ENCODE measurements at regions of chr7 and their contacts with region 1.

Region 1: DNA sequence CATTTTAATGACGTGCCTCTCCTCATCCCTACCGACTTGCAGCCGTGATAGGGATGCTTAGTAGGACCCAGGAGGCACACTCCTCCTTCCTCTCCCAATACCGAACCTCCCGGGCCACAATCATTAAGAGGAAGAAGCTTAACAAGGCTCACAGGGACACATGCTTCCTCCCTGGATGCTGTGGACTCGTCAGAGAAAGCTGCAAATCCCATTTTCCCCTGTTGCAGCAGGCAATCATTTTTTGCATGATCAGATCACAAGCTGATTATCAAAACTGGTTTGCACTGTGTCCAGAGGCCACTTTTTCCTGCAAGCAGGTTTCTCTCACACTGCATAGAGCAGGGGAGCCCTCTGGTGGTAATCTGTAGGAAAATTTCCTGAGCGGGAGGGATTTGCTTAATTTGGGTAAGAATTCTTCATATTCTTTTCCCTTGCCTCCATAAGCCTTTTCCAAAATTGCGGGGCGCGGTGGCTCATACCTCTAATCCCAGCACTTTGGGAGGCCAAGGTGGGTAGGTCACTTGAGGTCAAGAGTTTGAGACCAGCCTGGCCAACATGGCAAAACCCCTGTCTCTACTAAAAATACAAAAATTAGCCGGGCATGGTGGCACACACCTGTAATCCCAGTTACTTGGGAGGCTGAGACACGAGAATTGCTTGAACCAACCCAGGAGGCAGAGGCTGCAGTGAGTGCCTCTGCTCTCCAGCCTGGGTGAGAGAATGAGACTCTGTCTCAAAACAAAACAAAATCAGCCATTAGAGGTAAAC is 16.1 kb upstream of the LAMB4 start:
- DNase-seq: no peak
- H3K4me3 ChIP-seq: peak overlapping the region in 1 of 8 donors; percentile 34
- H3K27ac ChIP-seq: no peak overlapping the region
- H3K4me1 ChIP-seq: peaks cover 0 to 9% (median 4%) of the 10 kb centered on the region in 6 donors
- H3K27me3 ChIP-seq: peaks cover 0 to 4% (median 0%) of the 10 kb centered on the region in 7 donors
- CTCF ChIP-seq: peak; percentile 28 to 80 (median 70)
- POLR2A ChIP-seq: peak in 1 of 3 donors; percentile 25

Region 2: DNA sequence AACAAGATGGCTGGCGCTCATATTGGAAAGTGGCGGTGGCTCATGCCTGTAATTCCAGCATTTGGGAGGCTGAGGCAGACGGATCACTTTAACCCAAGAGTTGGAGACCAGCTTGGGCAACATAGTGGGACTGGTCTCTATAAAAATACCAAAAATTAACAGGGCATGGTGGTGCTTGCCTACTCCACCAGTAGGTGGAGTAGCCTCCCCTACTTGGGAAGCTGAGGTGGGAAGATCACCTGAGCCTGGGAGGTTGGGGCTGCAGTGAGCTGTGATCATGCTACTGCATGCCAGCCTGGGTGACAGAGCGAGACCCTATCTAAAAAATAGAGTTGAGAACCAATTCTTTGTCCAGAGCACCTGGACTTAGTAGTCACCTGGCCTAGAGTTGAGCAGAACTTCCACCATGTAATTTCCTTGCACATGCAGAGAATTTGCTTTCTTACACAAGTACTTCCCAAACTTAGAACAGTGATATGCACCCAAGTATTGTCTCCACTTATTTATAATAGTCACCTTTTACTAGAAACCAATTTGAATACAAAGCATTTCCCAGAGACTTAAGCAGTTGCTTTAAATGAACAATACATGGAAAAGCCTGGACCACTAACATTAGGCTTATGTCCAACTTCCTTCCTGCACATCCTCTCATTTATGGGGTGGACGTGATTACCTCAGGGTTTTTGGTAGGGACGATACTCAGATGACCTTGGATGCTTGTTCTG is 32.0 kb before region 1 on chr7:
- intact Hi-C with region 1: loop called (anchors 5 kb)
- DNase-seq: no peak
- H3K4me3 ChIP-seq: no peak overlapping the region
- H3K27ac ChIP-seq: peak overlapping the region in 6 of 8 donors; percentile 13 to 50 (median 40)
- H3K4me1 ChIP-seq: peaks cover 0 to 4% (median 0%) of the 10 kb centered on the region in 6 donors
- H3K27me3 ChIP-seq: no peaks in the 10 kb centered on the region
- CTCF ChIP-seq: peak in 10 of 11 experiments; percentile 21 to 57 (median 39)
- POLR2A ChIP-seq: no peak

Region 3: GRCh38 chr7:109020251-109020650 is 874.0 kb after region 1 on chr7:
- intact Hi-C with region 1: no loop called
- DNase-seq: no peak
- H3K4me3 ChIP-seq: no peak overlapping the region
- H3K27ac ChIP-seq: no peak overlapping the region
- H3K4me1 ChIP-seq: no peaks in the 10 kb centered on the region
- H3K27me3 ChIP-seq: no peaks in the 10 kb centered on the region
- CTCF ChIP-seq: no peak
- POLR2A ChIP-seq: no peak

Measured in spleen (tissue), 13 donors.